ENCODE measurements at regions of chr3 and their contacts with region 1.

Region 1: DNA sequence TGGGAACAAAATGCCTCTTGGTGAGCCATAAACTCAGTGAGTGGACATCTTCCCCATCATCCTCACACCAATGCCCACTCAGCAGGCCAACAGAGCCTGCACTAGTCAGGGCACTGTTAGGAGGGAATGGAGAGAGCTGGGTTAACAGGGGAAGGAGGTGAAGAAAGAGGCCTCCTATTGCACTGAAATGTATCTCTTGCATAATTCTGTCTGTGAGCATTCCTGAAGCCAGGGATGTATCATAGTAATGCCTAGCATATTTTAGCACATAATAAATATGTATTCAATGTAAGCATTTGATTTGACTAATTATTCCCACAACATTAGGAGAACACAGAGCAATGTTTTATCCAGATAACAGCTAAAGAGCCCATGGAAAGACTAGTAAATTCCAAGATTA is 81.2 kb downstream of the ANO10 start:
- DNase-seq: no peak
- ATAC-seq: no peak
- H3K4me3 ChIP-seq: no peak overlapping the region
- H3K4me3 Mint-ChIP-seq: no peak overlapping the region
- H3K27ac ChIP-seq: no peak overlapping the region
- H3K27ac Mint-ChIP-seq: no peak overlapping the region
- H3K4me1 ChIP-seq: no peaks in the 10 kb centered on the region
- H3K4me1 Mint-ChIP-seq: no peaks in the 10 kb centered on the region
- H3K27me3 ChIP-seq: no peaks in the 10 kb centered on the region
- H3K27me3 Mint-ChIP-seq: no peaks in the 10 kb centered on the region

Region 2: GRCh38 chr3:43442872-43443395 is 97.7 kb before region 1 on chr3:
- CTCF ChIA-PET with region 1: no interaction called
- POLR2A ChIA-PET with region 1: no interaction called
- intact Hi-C with region 1: no loop called
- DNase-seq: no peak
- ATAC-seq: no peak
- H3K4me3 ChIP-seq: no peak overlapping the region
- H3K4me3 Mint-ChIP-seq: no peak overlapping the region
- H3K27ac ChIP-seq: no peak overlapping the region
- H3K27ac Mint-ChIP-seq: peak overlapping the region in 1 of 9 donors; percentile 92
- H3K4me1 ChIP-seq: no peaks in the 10 kb centered on the region
- H3K4me1 Mint-ChIP-seq: peaks cover 6 to 19% (median 8%) of the 10 kb centered on the region in 7 donors
- H3K27me3 ChIP-seq: no peaks in the 10 kb centered on the region
- H3K27me3 Mint-ChIP-seq: no peaks in the 10 kb centered on the region

Region 3: GRCh38 chr3:43690400-43691119 is 149.9 kb after region 1 on chr3 and contains the start of gene ABHD5:
- CTCF ChIA-PET with region 1: no interaction called
- POLR2A ChIA-PET with region 1: no interaction called
- intact Hi-C with region 1: loop called in 1 of 2 experiments (anchors 2 kb)
- DNase-seq: peak; percentile 94 to 99 (median 96)
- ATAC-seq: peak; percentile 96
- H3K4me3 ChIP-seq: peak within 1 kb of the TSS; percentile 74
- H3K4me3 Mint-ChIP-seq: peak within 1 kb of the TSS; percentile 91 to 98 (median 94)
- H3K27ac ChIP-seq: peak within 1 kb of the TSS; percentile 85
- H3K27ac Mint-ChIP-seq: peak within 1 kb of the TSS; percentile 90 to 97 (median 92)
- H3K4me1 ChIP-seq: peaks cover 8% of the 10 kb centered on the region in 2 donors
- H3K4me1 Mint-ChIP-seq: peaks cover 11 to 47% (median 37%) of the 10 kb centered on the region in 7 donors
- H3K27me3 ChIP-seq: no peaks in the 10 kb centered on the region
- H3K27me3 Mint-ChIP-seq: peaks cover 0 to 6% (median 0%) of the 10 kb centered on the region in 5 donors
- total RNA-seq, gene ABHD5: 6.1 to 21.0 (median 12.1) TPM

Region 4: DNA sequence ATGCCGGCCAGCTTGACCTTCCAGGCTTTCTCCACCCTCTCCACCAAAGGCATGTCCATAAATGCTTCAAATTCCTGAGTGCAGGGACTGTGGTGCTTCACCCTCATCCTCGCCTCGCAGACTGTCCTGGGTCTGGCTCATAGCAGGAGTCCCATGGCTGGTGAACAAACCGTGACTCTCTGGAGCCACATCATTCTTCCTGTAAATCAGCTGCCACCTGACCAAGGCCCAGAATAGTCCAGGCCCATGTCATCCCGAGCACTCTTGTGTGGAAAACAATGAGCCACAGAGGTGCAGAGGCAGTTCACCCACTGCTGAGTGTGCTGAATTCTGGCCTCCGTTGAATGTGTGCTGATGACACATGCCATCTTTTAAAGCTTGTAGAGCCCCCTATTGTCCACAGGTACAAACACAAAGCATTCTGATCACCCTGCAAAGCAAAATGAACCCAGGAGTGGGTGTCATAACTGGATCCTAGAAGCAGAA is 218.7 kb after region 1 on chr3:
- CTCF ChIA-PET with region 1: interaction called, 3 read pairs
- POLR2A ChIA-PET with region 1: interaction called, 3 read pairs
- intact Hi-C with region 1: loop called (anchors 1 to 5 kb)
- DNase-seq: peak in 5 of 9 donors; percentile 2 to 30 (median 26)
- ATAC-seq: peak; percentile 34
- H3K4me3 ChIP-seq: no peak overlapping the region
- H3K4me3 Mint-ChIP-seq: peak overlapping the region in 1 of 10 donors; percentile 12
- H3K27ac ChIP-seq: no peak overlapping the region
- H3K27ac Mint-ChIP-seq: peak overlapping the region in 5 of 9 donors; percentile 56 to 97 (median 84)
- H3K4me1 ChIP-seq: peaks cover 8 to 41% of the 10 kb centered on the region in 2 donors
- H3K4me1 Mint-ChIP-seq: peaks cover 19 to 54% (median 51%) of the 10 kb centered on the region in 7 donors
- H3K27me3 ChIP-seq: no peaks in the 10 kb centered on the region
- H3K27me3 Mint-ChIP-seq: peaks cover 0 to 9% (median 0%) of the 10 kb centered on the region in 5 donors

Region 5: DNA sequence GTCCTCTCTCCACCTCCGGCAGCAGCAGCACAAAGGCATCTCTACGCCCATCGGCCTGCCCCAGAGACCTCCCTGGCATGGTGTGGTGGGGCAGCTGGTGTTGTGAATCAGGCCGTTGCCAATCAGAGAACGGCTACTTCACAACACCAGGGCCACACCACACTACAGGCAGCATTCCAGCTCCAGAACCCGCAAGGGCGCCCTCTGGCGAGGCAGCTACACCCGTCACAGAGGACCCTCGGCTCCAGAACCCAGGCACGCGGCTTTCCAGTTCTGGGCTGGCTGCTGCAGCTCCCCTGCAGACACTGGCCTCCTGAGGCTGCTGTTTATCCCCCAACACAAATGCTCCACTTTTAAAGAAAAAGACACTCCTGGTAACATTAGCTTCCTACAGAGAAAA is 573.5 kb after region 1 on chr3:
- CTCF ChIA-PET with region 1: interaction called, 3 read pairs
- POLR2A ChIA-PET with region 1: no interaction called
- intact Hi-C with region 1: loop called in 1 of 2 experiments (anchors 1 kb)
- DNase-seq: peak in 5 of 9 donors; percentile 3 to 15 (median 11)
- ATAC-seq: no peak
- H3K4me3 ChIP-seq: no peak overlapping the region
- H3K4me3 Mint-ChIP-seq: no peak overlapping the region
- H3K27ac ChIP-seq: no peak overlapping the region
- H3K27ac Mint-ChIP-seq: no peak overlapping the region
- H3K4me1 ChIP-seq: no peaks in the 10 kb centered on the region
- H3K4me1 Mint-ChIP-seq: no peaks in the 10 kb centered on the region
- H3K27me3 ChIP-seq: no peaks in the 10 kb centered on the region
- H3K27me3 Mint-ChIP-seq: peaks cover 5 to 26% (median 24%) of the 10 kb centered on the region in 5 donors

Region 6: GRCh38 chr3:44235604-44236484 is 695.2 kb after region 1 on chr3:
- CTCF ChIA-PET with region 1: no interaction called
- POLR2A ChIA-PET with region 1: no interaction called
- intact Hi-C with region 1: loop called (anchors 1 kb)
- DNase-seq: peak in 8 of 9 donors; percentile 36 to 71 (median 64)
- ATAC-seq: peak; percentile 96
- H3K4me3 ChIP-seq: no peak overlapping the region
- H3K4me3 Mint-ChIP-seq: peak overlapping the region in 2 of 10 donors; percentile 5 to 23
- H3K27ac ChIP-seq: no peak overlapping the region
- H3K27ac Mint-ChIP-seq: no peak overlapping the region
- H3K4me1 ChIP-seq: no peaks in the 10 kb centered on the region
- H3K4me1 Mint-ChIP-seq: peaks cover 4 to 16% (median 12%) of the 10 kb centered on the region in 7 donors
- H3K27me3 ChIP-seq: no peaks in the 10 kb centered on the region
- H3K27me3 Mint-ChIP-seq: peaks cover 8 to 18% (median 9%) of the 10 kb centered on the region in 5 donors

Measured in naive thymus-derived CD4-positive, alpha-beta T cell (primary cell).